Natural killer cell (primary cell): ENCODE measurements at regions of chr3 and their contacts with region 1.

Region 1: GRCh38 chr3:168213920-168214319 is 118.2 kb upstream of the GOLIM4 start:
- DNase-seq: peak in 1 of 2 donors; percentile 11
- ATAC-seq: peak; percentile 74 to 77 (median 75)
- H3K4me3 ChIP-seq: no peak overlapping the region
- H3K4me3 Mint-ChIP-seq: peak overlapping the region; percentile 43
- H3K27ac ChIP-seq: no peak overlapping the region
- H3K27ac Mint-ChIP-seq: peak overlapping the region; percentile 39 to 79
- H3K4me1 ChIP-seq: peaks cover 3% of the 10 kb centered on the region
- H3K4me1 Mint-ChIP-seq: peaks cover 13 to 14% of the 10 kb centered on the region in 2 donors
- H3K27me3 ChIP-seq: no peaks in the 10 kb centered on the region
- H3K27me3 Mint-ChIP-seq: no peaks in the 10 kb centered on the region
- CTCF ChIP-seq: no peak

Region 2: GRCh38 chr3:168443967-168444366 is 230.0 kb after region 1 on chr3:
- intact Hi-C with region 1: no loop called
- DNase-seq: no peak
- ATAC-seq: no peak
- H3K4me3 ChIP-seq: no peak overlapping the region
- H3K4me3 Mint-ChIP-seq: no peak overlapping the region
- H3K27ac ChIP-seq: no peak overlapping the region
- H3K27ac Mint-ChIP-seq: no peak overlapping the region
- H3K4me1 ChIP-seq: no peaks in the 10 kb centered on the region
- H3K4me1 Mint-ChIP-seq: no peaks in the 10 kb centered on the region
- H3K27me3 ChIP-seq: no peaks in the 10 kb centered on the region
- H3K27me3 Mint-ChIP-seq: no peaks in the 10 kb centered on the region
- CTCF ChIP-seq: no peak

Region 3: GRCh38 chr3:168847291-168847883 is 633.5 kb after region 1 on chr3:
- intact Hi-C with region 1: loop called (anchors 2 kb)
- DNase-seq: peak in 1 of 2 donors; percentile 11
- ATAC-seq: no peak
- H3K4me3 ChIP-seq: no peak overlapping the region
- H3K4me3 Mint-ChIP-seq: no peak overlapping the region
- H3K27ac ChIP-seq: no peak overlapping the region
- H3K27ac Mint-ChIP-seq: no peak overlapping the region
- H3K4me1 ChIP-seq: no peaks in the 10 kb centered on the region
- H3K4me1 Mint-ChIP-seq: no peaks in the 10 kb centered on the region
- H3K27me3 ChIP-seq: no peaks in the 10 kb centered on the region
- H3K27me3 Mint-ChIP-seq: peaks cover 4 to 8% of the 10 kb centered on the region in 2 donors
- CTCF ChIP-seq: no peak